Activated B cell treated with CpG ODN at 0.5 μM for 24 hours (primary cell): ENCODE measurements at regions of chr17 and their contacts with region 1.

Region 1: DNA sequence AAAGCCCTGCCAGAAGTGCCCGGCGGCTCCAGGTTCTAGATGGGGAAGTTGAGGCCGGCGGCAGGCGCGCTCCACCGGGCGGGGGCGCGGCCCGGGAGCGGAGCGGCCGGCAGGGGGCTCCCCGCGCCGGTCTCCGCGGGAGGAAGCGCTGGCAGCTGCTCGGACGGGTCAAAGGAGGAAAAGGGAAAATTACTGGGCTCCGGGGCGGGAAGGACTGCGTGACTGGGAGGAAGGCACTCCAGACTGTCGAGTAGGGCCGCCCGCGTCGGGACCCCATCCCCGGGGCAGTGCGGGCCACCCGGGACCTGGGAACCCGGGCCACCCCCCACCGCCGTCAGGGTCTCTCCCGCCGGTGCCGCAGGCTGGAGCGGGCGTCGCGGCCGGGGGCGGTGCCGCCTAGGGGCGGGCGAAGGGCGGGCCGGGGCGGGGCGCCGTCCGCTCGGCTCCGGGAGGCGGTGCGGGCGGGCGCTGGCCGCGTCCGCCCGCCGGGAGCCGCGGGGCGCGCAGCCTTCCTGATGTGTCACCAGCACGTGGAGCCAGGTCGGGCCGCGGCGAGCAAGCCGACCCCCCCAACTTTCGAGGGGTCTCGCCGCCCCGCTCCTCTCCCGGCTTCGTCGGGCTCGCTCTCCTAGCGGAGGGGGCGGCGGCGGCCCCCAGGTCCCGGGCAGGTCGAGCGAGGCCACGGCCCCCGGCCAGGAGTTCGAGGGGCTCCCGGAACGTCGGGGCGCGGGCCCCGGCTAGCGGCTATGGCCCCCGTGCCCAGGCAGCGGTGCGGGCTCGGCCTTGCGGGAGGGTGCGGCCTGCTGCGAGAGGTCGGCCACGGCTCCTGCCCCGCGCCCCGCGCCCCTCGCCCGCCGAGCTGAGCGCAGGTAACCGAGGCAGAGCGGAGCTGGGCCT is 167.5 kb downstream of the RAB11FIP4 start:
- DNase-seq: peak; percentile 75
- ATAC-seq: peak; percentile 94
- H3K4me3 Mint-ChIP-seq: peak overlapping the region; percentile 73
- H3K27ac Mint-ChIP-seq: peak overlapping the region; percentile 18
- H3K4me1 Mint-ChIP-seq: peaks cover 35% of the 10 kb centered on the region
- H3K27me3 Mint-ChIP-seq: no peaks in the 10 kb centered on the region
- CTCF ChIP-seq: no peak

Region 2: DNA sequence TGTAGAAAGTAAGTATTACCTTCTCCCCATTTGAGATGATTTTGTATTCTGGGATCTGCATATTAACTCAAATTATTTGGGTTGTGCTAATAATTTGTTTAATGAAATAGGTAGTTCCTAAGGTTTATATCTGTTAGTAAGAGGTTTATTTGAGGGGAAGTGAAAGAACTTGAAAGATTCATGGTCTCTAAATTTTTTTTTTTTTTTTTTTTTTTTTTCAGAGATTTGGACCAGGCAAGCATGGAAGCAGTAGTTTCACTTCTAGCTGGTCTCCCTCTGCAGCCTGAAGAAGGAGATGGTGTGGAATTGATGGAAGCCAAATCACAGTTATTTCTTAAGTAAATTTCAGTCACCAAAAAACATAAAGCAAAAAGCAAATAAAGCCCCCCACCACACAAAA is 327.1 kb before region 1 on chr17:
- CTCF ChIA-PET with region 1: no interaction called
- POLR2A ChIA-PET with region 1: no interaction called
- intact Hi-C with region 1: no loop called
- DNase-seq: no peak
- ATAC-seq: no peak
- H3K4me3 Mint-ChIP-seq: no peak overlapping the region
- H3K27ac Mint-ChIP-seq: no peak overlapping the region
- H3K4me1 Mint-ChIP-seq: peaks cover 16% of the 10 kb centered on the region
- H3K27me3 Mint-ChIP-seq: no peaks in the 10 kb centered on the region
- CTCF ChIP-seq: no peak

Region 3: DNA sequence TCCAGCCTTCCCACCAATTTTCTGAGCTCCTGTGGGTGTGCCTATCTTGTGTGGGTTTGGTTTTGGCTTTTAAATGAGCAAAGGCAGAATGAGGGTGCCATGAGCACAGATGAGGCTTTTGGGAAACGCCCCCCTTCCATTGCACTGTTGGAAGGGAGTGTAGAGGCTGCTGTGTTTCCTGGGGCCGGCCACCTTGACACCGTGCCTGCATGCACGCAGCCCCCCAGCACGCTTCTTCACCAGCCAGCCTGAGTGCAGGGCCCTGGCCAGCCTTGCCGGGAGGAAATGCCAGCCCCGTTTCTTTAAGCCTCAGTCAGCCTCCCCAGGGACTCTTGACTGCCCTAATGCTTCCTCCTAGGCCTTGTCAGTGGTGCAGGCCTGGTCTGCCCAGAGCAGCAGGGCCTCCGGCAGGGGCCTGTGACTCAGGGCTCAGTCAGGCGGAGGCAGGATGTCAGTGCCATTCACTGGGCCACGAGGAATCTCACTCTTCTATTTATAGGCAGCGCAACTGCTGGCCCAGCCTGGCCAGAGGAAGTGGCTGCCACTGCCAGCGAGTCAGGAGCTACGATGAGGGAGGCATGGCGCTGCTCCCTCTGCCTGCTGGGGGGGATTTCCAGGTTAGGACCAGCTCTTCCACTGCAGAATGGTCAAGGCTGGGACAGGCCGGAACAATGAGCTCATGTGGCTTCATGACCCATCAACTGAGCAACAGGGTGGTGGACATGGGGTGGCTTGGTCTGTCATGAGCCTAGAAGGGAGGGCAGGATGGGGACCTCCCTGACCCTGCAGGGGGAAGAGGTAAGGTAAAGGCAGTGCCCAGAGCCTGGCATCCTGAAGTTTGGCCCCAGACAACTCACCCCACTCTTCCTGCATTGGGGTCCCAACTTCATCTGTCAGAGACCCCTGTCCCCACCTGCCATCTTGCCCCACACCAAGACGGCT is 37.7 kb after region 1 on chr17:
- CTCF ChIA-PET with region 1: no interaction called
- POLR2A ChIA-PET with region 1: no interaction called
- intact Hi-C with region 1: loop called (anchors 1 kb)
- DNase-seq: peak; percentile 66
- ATAC-seq: peak; percentile 100
- H3K4me3 Mint-ChIP-seq: peak overlapping the region; percentile 39
- H3K27ac Mint-ChIP-seq: peak overlapping the region; percentile 86
- H3K4me1 Mint-ChIP-seq: peaks cover 38% of the 10 kb centered on the region
- H3K27me3 Mint-ChIP-seq: no peaks in the 10 kb centered on the region
- CTCF ChIP-seq: no peak

Region 4: DNA sequence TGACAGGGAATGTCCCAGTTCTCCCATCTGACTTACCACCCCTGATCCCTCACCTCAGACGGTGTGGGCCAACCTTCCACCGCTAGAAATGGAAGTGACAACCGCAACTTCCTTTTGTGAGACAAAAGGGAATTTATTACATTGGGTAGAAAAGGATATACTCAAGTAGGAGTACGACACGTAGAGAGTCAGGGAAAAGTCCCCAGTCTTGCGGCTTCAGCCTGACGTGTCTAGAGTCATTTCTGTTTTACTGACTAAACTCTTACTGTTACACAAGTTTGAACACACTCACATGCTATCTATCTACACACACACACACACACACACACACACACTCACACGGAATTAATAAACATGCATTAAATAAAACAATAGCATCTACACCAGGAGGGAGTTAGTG is 121.1 kb after region 1 on chr17:
- CTCF ChIA-PET with region 1: no interaction called
- POLR2A ChIA-PET with region 1: no interaction called
- intact Hi-C with region 1: loop called (anchors 10 kb)
- DNase-seq: no peak
- ATAC-seq: no peak
- H3K4me3 Mint-ChIP-seq: no peak overlapping the region
- H3K27ac Mint-ChIP-seq: no peak overlapping the region
- H3K4me1 Mint-ChIP-seq: no peaks in the 10 kb centered on the region
- H3K27me3 Mint-ChIP-seq: peaks cover 32% of the 10 kb centered on the region
- CTCF ChIP-seq: no peak

Region 5: GRCh38 chr17:31842183-31843069 is 283.4 kb after region 1 on chr17:
- CTCF ChIA-PET with region 1: interaction called, 63 read pairs
- POLR2A ChIA-PET with region 1: interaction called, 3 read pairs
- intact Hi-C with region 1: loop called (anchors 1 kb)
- DNase-seq: peak; percentile 48
- ATAC-seq: peak; percentile 98
- H3K4me3 Mint-ChIP-seq: no peak overlapping the region
- H3K27ac Mint-ChIP-seq: no peak overlapping the region
- H3K4me1 Mint-ChIP-seq: no peaks in the 10 kb centered on the region
- H3K27me3 Mint-ChIP-seq: peaks cover 3% of the 10 kb centered on the region
- CTCF ChIP-seq: peak; percentile 51

Region 6: GRCh38 chr17:32429598-32429997 is 870.6 kb after region 1 on chr17:
- CTCF ChIA-PET with region 1: no interaction called
- POLR2A ChIA-PET with region 1: no interaction called
- intact Hi-C with region 1: no loop called
- DNase-seq: no peak
- ATAC-seq: no peak
- H3K4me3 Mint-ChIP-seq: no peak overlapping the region
- H3K27ac Mint-ChIP-seq: no peak overlapping the region
- H3K4me1 Mint-ChIP-seq: no peaks in the 10 kb centered on the region
- H3K27me3 Mint-ChIP-seq: no peaks in the 10 kb centered on the region
- CTCF ChIP-seq: no peak